H1 (cell line): ENCODE measurements at regions of chr2 and their contacts with region 1.

Region 1: GRCh38 chr2:219560037-219560892 is 11.1 kb downstream of the OBSL1 start:
- DNase-seq: peak in 1 of 2 experiments; percentile 79
- H3K4me3 ChIP-seq: no peak overlapping the region
- H3K27ac ChIP-seq: peak overlapping the region; percentile 54; the same call in 1 of the 2 replicates
- H3K4me1 ChIP-seq: peaks cover 6 to 43% (median 36%) of the 10 kb centered on the region in 4 experiments
- H3K27me3 ChIP-seq: no peaks in the 10 kb centered on the region
- CTCF ChIP-seq: peak in 2 of 3 experiments; percentile 51 to 54; a peak in 3 of 4 replicates
- EP300 ChIP-seq: no peak
- POLR2A ChIP-seq: peak in 1 of 2 experiments; percentile 44; a peak in 1 of 3 replicates
- RAD21 ChIP-seq: peak; percentile 36 to 41

Region 2: DNA sequence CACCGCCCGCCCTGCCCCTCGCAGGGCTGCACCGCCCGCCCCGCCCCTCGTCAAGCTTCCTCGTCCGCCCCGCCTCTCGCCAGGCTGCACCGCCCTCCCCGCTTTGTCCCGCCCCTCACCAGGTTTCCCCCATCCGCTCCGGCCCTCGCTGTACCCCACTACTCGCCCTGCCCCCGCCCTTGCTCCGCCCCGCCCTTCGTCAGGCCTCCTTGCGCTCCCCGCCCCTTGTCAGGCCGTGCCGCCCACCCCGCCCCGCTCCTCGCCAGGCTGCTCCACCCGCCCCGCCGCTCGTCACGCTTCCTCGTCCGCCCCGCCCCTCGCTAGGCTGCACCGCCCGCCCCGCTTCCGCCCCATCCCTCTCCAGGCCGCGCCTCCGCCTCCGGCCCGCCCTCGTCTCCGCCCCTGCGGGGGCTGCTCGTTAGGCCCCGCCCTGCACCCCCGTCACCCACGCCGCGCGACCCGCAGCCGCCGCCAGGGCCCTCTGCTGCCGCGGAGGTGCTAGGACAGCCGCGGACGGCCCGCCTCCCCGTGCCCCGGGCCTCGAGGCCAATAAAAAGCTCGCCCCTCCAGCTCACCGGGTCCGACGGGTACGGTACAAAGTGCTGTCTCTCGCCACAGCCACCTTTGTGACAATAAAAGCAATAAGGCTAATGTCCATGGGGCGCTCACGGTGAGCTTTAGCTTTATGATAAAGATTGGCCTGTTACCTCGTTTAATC is 172.0 kb before region 1 on chr2:
- CTCF ChIA-PET with region 1: interaction called, 10 read pairs
- POLR2A ChIA-PET with region 1: no interaction called
- DNase-seq: peak; percentile 81 to 97
- H3K4me3 ChIP-seq: peak overlapping the region; percentile 36 to 75 (median 54)
- H3K27ac ChIP-seq: no peak overlapping the region
- H3K4me1 ChIP-seq: peaks cover 0 to 14% (median 4%) of the 10 kb centered on the region in 4 experiments; a peak in 5 of 7 replicates
- H3K27me3 ChIP-seq: no peaks in the 10 kb centered on the region; a peak in 1 of 7 replicates
- CTCF ChIP-seq: peak; percentile 33 to 67 (median 50)
- EP300 ChIP-seq: no peak; a peak in 1 of 3 replicates
- POLR2A ChIP-seq: no peak
- RAD21 ChIP-seq: peak in 1 of 2 experiments; percentile 24; a peak in 1 of 4 replicates

Region 3: GRCh38 chr2:219530048-219530963 is 30.0 kb before region 1 on chr2:
- CTCF ChIA-PET with region 1: interaction called, 293 read pairs
- POLR2A ChIA-PET with region 1: interaction called, 4 read pairs
- DNase-seq: peak in 1 of 2 experiments; percentile 97
- H3K4me3 ChIP-seq: peak overlapping the region in 2 of 4 experiments; percentile 22 to 56; a peak in 4 of 8 replicates
- H3K27ac ChIP-seq: no peak overlapping the region
- H3K4me1 ChIP-seq: peaks cover 0 to 8% (median 3%) of the 10 kb centered on the region in 4 experiments; a peak in 4 of 7 replicates
- H3K27me3 ChIP-seq: peaks cover 0 to 24% (median 10%) of the 10 kb centered on the region in 4 experiments; a peak in 6 of 7 replicates
- CTCF ChIP-seq: peak in 2 of 3 experiments; percentile 96 to 99; a peak in 3 of 4 replicates
- EP300 ChIP-seq: no peak
- POLR2A ChIP-seq: no peak
- RAD21 ChIP-seq: peak; percentile 99 to 100

Region 4: DNA sequence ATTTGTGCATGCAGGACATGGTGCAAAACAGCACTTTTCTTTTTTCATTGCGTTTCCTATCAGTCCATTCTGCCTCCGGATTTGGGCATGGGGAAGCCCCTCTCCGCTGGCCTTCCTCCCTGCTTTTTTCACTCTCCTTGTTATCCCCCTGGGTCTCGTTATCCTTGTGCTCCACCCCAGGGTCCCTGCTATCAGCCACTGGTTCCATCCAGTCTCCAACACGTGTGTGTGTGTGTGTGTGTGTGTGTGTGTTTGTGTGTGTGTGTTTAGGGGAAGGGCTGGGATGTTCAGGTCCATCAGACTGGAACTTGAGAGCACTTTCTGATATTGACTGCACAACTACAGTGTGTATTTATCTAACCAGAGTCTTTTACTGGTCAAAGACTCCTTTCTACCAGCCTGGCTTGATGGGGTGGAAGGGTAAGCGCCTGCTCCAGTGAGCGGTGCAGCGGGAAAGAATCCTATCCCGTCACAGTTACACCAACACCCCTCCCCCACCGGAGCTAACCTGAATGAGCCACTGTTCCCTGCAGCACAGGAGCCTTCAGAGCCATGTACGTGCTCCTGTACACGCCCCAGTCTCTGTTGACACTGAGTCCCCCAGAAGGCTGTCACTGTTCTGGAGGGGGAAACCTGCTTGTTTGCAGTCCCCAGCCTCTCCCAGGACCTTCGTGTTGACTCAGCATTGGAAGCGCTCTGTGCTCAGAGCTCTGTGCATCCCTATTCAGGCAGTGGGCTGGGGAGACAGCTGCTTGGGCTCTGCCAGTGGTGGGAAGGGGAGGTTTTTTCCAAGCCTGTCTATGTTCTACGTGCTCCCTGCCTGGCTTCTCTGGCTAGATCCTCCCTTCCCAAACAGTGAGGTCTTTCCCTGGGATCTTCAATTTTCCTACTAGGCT is 16.5 kb after region 1 on chr2:
- CTCF ChIA-PET with region 1: interaction called, 64 read pairs
- POLR2A ChIA-PET with region 1: interaction called, 293 read pairs
- DNase-seq: peak in 1 of 2 experiments; percentile 78
- H3K4me3 ChIP-seq: peak overlapping the region in 1 of 4 experiments; percentile 40; a peak in 2 of 8 replicates
- H3K27ac ChIP-seq: no peak overlapping the region
- H3K4me1 ChIP-seq: peaks cover 7 to 26% (median 21%) of the 10 kb centered on the region in 4 experiments
- H3K27me3 ChIP-seq: no peaks in the 10 kb centered on the region; a peak in 1 of 7 replicates
- CTCF ChIP-seq: no peak
- EP300 ChIP-seq: no peak
- POLR2A ChIP-seq: peak in 1 of 2 experiments; percentile 38; a peak in 1 of 3 replicates
- RAD21 ChIP-seq: no peak

Region 5: DNA sequence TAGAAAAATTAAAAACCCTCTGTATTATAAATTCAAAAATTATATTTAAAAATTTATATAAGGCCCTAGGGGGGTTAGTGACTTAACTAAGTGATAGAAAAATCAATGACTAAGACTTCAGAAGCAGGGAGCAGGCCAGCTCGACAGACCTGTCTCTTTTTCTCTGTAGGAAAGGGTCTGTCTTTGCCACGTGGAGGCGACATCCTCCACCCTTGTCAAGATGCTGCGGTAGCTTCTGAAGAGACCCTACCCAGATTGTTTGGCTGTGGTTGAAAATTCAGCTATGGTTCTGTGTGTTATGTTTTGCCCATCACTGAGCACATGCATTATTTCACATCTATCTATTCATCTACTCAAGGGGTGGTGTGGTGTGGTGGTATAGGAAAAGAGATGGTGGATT is 59.0 kb after region 1 on chr2:
- CTCF ChIA-PET with region 1: interaction called, 20 read pairs
- POLR2A ChIA-PET with region 1: no interaction called
- DNase-seq: no peak
- H3K4me3 ChIP-seq: no peak overlapping the region
- H3K27ac ChIP-seq: no peak overlapping the region
- H3K4me1 ChIP-seq: no peaks in the 10 kb centered on the region
- H3K27me3 ChIP-seq: no peaks in the 10 kb centered on the region
- CTCF ChIP-seq: peak; percentile 58 to 80 (median 63)
- EP300 ChIP-seq: no peak
- POLR2A ChIP-seq: no peak
- RAD21 ChIP-seq: peak; percentile 75 to 84

Region 6: GRCh38 chr2:219642465-219643080 is 82.3 kb after region 1 on chr2:
- CTCF ChIA-PET with region 1: interaction called, 28 read pairs
- POLR2A ChIA-PET with region 1: interaction called, 11 read pairs
- DNase-seq: peak; percentile 95 to 96
- H3K4me3 ChIP-seq: peak overlapping the region in 1 of 4 experiments; percentile 13; a peak in 1 of 8 replicates
- H3K27ac ChIP-seq: no peak overlapping the region
- H3K4me1 ChIP-seq: peaks cover 0 to 6% (median 2%) of the 10 kb centered on the region in 4 experiments; a peak in 5 of 7 replicates
- H3K27me3 ChIP-seq: peaks cover 0 to 6% (median 3%) of the 10 kb centered on the region in 4 experiments; a peak in 5 of 7 replicates
- CTCF ChIP-seq: peak in 2 of 3 experiments; percentile 100; a peak in 3 of 4 replicates
- EP300 ChIP-seq: peak in 1 of 2 experiments; percentile 23; a peak in 1 of 3 replicates
- POLR2A ChIP-seq: 0 out of 3 replicates have a peak, but pooled peaks of 1 of the 2 experiments have one; percentile 17
- RAD21 ChIP-seq: peak; percentile 95 to 96